Aorta (tissue), 5 donors: ENCODE measurements at regions of chr14 and their contacts with region 1.

Region 1: DNA sequence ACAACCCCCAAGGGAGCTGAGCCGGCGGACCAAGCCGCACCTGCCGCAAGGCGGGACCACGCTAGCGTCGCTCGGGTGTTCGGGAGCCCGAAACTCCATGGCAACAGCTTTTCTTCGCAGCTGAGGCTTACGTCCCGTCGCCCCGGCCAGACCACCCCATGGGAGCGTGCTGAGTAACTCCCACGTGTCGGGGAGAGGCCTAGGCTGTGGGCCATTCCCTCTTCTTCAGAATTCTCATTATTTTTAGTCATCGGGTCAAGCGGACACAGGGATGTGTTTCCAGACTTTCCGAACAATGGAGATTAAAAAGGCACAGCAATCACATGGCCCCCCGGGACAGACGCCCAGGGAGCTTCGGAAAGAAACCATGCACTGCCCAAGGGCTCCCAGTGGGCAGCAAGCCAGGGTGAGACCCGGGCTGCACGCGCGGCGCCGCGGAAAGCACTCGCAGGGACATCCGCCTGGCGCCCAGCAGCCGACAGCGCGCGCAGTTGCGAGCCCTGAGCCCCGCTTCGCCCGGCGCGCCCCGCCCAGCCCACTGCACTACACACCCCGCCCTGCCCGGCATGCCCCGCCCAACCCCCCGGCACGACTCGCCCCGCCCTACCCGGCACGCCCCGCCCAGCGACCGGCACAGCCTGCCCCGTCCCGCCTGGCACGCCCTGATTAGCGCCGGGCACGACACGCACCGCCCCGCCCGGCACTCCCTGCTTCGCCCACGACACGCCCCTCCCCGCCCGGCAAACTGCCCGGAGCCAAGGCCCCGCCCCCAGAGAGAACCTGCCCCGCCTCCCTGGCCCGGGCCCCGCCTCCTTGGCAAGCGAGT is 422 bp upstream of the AK7 start:
- DNase-seq: peak; percentile 98 to 99
- ATAC-seq: peak; percentile 99
- H3K4me3 ChIP-seq: peak overlapping the region; percentile 19 to 85
- H3K27ac ChIP-seq: no peak overlapping the region
- H3K4me1 ChIP-seq: no peaks in the 10 kb centered on the region
- H3K27me3 ChIP-seq: no peaks in the 10 kb centered on the region

Region 2: GRCh38 chr14:96362965-96363756 is 28.3 kb before region 1 on chr14 and contains the starts of genes ATG2B and GSKIP:
- intact Hi-C with region 1: loop called in 1 of 2 experiments (anchors 1 kb)
- DNase-seq: peak; percentile 96 to 98
- ATAC-seq: peak; percentile 99
- H3K4me3 ChIP-seq: peak within 1 kb of the TSS; percentile 88 to 93
- H3K27ac ChIP-seq: peak within 1 kb of the TSS in 1 of 2 donors; percentile 79
- H3K4me1 ChIP-seq: peaks cover 0 to 3% of the 10 kb centered on the region in 2 donors
- H3K27me3 ChIP-seq: no peaks in the 10 kb centered on the region
- total RNA-seq, gene ATG2B: 19.5 to 36.7 TPM
- total RNA-seq, gene GSKIP: 11.2 to 17.2 TPM